Posterior cingulate gyrus (tissue), 11 donors: ENCODE measurements at regions of chr7 and their contacts with region 1.

Region 1: DNA sequence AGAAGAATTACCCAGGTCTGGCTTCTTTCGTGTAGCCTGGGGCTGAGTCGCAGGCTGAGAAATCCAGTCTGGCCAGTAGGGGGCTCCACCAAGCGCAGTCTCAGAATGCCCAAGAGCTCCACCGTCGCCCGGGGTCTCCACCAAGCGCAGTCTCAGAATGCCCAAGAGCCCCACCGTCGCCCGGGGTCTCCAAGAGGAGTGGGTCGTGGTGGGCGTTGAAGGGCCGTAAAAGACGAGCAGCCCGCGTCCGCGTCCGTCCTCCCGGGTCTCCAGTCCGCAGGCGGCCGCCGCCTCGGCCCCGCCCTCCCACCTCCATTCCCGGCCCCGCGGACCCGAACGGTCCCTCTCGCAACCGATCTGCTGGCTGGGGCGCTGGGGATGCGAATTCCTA is 895 bp upstream of the ZYX start:
- DNase-seq: peak; percentile 74 to 97 (median 86)

Region 2: GRCh38 chr7:143287935-143288826 is 92.1 kb before region 1 on chr7 and contains the start of gene CASP2:
- intact Hi-C with region 1: loop called (anchors 2 kb)
- DNase-seq: peak; percentile 93 to 100 (median 97)

Region 3: GRCh38 chr7:143458263-143458662 is 78.0 kb after region 1 on chr7:
- intact Hi-C with region 1: no loop called
- DNase-seq: no peak

Region 4: DNA sequence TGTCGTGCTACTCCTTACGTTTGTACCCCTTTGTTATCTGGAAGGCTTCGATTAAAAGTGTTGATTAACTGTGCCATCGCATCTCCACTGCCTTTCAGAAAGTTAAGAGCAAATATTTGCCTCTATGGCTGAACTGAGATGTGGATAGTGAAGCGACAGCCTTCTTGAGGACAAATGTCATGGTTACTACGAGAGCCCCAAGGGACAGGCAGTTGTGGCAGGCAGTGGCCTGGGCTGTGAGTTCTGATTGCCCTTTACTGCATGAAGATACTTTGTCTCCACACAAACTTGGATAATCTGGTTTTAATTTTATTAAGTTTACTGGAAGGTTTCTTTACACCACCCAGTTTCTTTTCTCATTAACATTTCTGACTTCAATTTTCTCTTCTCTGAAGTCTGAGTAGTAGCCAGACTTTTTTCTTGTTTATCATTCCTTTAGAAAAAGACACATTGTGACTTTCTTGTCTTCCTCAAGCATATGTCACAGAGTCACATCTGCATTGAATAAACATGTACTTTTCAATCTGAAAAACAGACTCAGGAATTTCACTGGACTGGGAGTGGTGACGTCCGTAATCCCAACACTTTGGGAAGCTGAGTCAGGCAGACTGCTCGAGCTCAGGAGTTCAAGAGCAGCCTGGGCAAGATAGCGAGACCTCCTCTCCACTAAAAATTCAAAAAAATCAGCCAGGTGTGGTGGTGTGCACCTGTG is 99.0 kb after region 1 on chr7:
- intact Hi-C with region 1: no loop called
- DNase-seq: no peak

Region 5: DNA sequence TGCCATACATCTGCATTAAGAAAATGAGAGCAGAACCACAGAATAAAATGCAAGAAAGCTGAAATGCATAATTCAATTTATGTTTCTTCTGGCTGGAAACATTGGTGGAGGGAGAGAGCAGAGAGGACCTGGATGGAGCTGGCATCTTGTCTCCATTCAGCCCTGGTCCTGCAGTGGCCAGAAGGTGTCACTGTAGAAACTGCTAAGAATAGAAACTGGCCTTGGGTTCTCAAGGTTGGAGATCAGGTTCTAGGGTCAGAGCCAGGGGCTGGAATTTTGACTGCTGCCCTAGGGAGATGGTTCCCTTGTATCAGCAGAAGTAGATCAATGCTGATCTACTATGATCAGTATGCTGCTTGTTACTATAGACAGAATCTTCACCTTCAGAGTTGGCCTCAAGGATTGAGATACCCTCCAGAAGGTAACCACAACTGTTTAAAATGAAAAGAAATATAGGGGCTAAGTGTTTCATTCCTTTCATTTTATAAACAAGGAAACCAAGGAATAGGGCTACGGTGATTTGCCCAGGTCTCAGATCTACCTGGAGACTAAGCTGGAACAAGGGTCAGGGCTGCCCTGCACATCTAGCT is 110.6 kb after region 1 on chr7:
- intact Hi-C with region 1: no loop called
- DNase-seq: no peak